ENCODE measurements at regions of chr1 and their contacts with region 1.

Region 1: DNA sequence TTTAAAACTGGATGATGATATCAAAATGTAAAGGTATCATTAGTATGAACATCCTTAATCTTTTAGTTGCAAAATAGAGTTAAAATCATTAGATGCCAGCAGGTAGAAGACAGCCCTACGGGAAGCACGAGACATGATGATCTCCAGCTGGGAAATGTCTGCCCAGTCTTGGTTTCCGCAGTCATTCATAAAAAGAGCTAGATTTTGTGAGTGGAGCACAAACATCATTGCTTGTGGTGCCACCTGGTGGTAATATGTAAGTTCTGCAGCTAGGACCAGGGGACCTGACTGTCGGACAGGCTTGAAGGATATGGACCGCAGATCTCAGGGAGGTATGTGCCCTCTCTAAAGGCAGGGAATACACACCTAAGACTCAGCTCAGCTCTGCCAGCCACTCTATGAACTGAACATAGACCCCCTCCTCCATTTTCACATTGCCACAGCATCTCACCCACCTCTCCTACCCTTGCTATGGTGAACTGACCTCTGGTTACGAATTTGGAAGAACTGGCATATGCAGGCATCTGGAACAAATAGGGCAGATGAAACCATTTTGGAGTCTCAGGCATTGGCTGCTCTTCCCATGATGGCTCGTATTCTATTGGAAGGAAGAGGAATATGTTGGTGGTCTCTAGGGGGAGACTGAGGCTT is 9.2 kb downstream of the FCMR start:
- DNase-seq: peak; percentile 70
- CTCF ChIP-seq: peak; percentile 76

Region 2: GRCh38 chr1:206635080-206635977 is 277.2 kb before region 1 on chr1 and contains the start of gene DYRK3:
- CTCF ChIA-PET with region 1: interaction called, 13 read pairs
- POLR2A ChIA-PET with region 1: no interaction called
- DNase-seq: peak; percentile 97
- CTCF ChIP-seq: no peak

Region 3: GRCh38 chr1:206725109-206725963 is 187.2 kb before region 1 on chr1:
- CTCF ChIA-PET with region 1: interaction called, 68 read pairs
- POLR2A ChIA-PET with region 1: no interaction called
- DNase-seq: peak; percentile 71
- CTCF ChIP-seq: peak; percentile 75

Region 4: DNA sequence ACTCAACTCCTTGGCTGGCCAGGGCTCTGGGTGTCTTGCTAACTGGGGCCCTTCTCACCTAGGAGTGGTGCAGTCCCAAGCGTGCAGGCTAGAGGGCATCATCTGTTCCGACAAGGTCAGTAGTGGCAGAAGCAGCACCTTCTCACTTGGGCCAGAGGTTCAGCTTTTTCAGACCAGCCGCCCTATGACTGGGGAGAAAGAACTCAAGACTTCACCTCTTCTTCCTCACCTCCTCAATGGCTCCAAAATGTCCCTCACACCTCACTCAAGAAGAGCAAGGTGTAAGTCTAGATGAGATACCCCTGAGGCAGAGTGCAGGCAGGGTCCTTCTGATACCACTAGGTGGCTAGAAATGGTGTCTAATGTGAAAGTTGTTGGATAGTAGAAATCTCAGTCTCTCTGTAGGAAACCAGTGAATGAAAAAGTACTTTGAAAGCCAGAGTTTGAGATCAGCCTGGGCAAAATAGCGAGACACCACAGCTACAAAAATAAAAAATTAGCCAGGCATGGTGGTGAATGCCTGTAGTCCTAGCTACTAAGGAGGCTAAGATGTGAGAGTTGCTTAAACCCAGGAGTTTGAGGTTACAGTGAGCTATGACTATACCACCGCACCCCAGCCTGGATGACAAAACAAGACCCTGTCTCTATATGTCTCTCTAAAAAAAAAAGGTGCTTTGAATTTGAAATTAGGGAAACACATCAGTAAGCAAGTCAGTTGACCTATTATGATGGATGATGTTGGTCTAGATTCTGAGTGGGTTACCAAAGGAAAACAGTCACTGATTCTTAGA is 55.7 kb before region 1 on chr1:
- CTCF ChIA-PET with region 1: interaction called, 18 read pairs
- POLR2A ChIA-PET with region 1: no interaction called
- DNase-seq: no peak
- CTCF ChIP-seq: no peak

Region 5: DNA sequence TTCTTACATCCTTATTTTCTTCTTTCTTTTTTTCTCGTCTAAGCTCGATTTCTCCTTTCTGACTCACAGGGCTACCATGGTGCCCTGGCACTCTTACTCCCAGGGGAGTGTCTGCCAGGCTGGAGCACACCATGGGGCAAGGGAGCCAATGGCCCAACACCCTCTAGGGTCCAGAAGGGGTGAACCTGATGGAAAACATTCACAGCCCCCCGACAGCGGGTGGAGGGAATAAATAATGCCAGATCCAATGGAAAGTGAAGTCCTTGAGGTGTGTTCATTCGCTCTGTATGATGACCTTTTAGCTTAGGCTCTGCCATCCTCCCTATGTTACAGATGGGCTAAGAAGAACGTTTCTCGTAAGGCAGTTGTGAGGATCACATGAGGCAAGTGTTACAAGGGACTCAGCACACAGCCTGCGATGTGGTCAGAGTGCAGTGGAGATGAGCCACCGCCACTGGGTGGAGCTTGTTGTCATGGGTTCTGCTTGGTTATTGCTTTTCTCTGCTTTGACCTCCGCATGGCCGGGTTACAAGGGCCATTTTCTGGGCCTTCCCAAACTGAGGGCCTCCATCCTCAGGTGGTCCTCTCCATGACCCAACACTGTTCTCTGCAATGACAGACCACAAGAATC is 12.7 kb after region 1 on chr1:
- CTCF ChIA-PET with region 1: interaction called, 307 read pairs
- POLR2A ChIA-PET with region 1: no interaction called
- DNase-seq: peak; percentile 81
- CTCF ChIP-seq: peak; percentile 69

Region 6: DNA sequence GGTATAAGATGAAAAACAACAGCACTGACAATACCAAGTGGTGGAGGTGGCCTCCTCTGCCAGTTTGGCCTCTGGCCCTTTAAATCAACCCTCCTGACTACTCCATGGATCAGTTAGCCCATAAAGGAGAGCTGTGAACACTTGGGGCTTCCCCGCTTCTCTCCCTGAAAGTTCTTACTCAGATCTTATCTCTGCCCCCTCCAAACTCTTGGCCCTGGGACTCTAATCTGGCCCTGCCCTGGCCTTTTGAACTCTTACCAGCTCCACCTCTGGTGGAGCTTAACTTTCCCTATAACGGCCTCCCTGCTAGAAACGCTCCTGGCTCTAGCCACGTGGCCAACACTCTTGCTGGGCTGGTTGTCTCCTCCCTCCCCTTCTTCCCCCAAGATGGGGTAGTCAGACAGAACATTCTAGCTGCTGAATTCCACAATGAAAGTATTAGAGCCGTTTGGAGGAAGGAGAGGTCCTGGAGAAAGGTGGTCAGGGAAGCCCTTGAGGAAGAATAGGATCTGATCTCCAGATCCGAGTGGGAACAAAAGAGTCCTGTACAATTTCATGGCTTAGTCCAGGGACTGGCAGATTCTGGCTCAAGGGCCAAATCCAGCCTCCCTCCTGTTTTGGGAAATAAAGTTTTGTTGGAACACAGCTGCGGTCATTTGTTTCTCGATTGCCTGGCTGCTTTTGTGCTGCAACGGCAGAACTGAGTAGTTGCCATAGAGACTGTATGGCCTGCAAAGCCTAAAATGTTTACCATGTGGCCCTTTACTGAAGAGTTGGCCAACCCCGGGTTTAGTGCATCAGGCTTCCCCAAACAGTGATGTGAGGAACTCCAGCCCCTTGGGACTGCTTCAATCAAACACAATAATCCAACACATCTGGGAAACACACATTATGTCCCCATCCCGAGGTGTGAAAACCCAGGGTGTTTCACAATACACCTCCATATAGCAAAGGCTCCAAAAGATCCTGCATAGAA is 43.2 kb after region 1 on chr1:
- CTCF ChIA-PET with region 1: interaction called, 20 read pairs
- POLR2A ChIA-PET with region 1: no interaction called
- DNase-seq: peak; percentile 59
- CTCF ChIP-seq: no peak

Region 7: GRCh38 chr1:207191776-207192175 is 279.2 kb after region 1 on chr1:
- CTCF ChIA-PET with region 1: no interaction called
- POLR2A ChIA-PET with region 1: no interaction called
- DNase-seq: no peak
- CTCF ChIP-seq: no peak

Measured in GM10248 (cell line).